ENCODE measurements at regions of chr10 and their contacts with region 1.

Region 1: GRCh38 chr10:124388823-124389612 is 29.7 kb downstream of the OAT start:
- DNase-seq: peak; percentile 91
- ATAC-seq: peak; percentile 99
- H3K4me3 Mint-ChIP-seq: no peak overlapping the region
- H3K27ac Mint-ChIP-seq: no peak overlapping the region
- H3K4me1 Mint-ChIP-seq: no peaks in the 10 kb centered on the region
- H3K27me3 Mint-ChIP-seq: no peaks in the 10 kb centered on the region

Region 2: DNA sequence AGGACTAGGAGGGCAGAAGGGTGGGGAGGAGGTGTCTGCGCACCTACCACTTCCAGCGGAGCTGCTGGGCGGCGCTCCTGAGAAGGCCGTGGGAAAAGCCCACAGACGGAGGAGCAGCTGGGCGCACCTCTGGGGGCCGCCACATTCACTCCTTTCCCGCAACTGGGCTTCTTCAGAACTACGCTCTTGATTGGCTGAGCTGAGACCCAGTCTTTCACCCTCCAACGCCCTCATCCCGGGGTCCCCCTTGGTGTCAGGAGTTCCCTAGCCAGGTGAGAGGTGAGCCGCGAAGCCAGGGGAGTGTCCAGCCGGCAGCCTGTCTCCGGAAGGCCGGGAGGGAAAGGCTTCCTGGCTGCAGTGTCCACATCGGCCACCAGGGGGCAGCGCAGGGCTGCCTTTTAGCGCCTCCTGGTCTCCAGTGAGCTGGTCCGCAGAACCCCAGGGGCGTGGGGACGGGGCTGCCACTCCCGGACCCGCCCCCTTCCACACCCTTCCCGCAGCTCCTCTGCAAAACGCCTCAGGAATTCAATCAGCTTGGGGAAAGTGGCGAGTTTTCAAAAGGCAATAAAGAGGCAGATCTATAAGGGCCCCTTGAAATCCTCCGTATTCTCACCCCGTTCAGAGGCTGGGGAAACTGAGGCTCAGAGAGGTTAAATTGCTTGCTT is 394.5 kb before region 1 on chr10:
- CTCF ChIA-PET with region 1: interaction called, 146 read pairs
- DNase-seq: peak; percentile 79
- ATAC-seq: peak; percentile 90
- H3K4me3 Mint-ChIP-seq: peak overlapping the region; percentile 11
- H3K27ac Mint-ChIP-seq: no peak overlapping the region
- H3K4me1 Mint-ChIP-seq: peaks cover 5% of the 10 kb centered on the region
- H3K27me3 Mint-ChIP-seq: peaks cover 65% of the 10 kb centered on the region

Region 3: GRCh38 chr10:124403548-124403947 is 14.5 kb after region 1 on chr10:
- CTCF ChIA-PET with region 1: interaction called, 51 read pairs
- DNase-seq: no peak
- ATAC-seq: peak; percentile 98
- H3K4me3 Mint-ChIP-seq: no peak overlapping the region
- H3K27ac Mint-ChIP-seq: peak overlapping the region; percentile 66
- H3K4me1 Mint-ChIP-seq: peaks cover 11% of the 10 kb centered on the region
- H3K27me3 Mint-ChIP-seq: no peaks in the 10 kb centered on the region

Region 4: DNA sequence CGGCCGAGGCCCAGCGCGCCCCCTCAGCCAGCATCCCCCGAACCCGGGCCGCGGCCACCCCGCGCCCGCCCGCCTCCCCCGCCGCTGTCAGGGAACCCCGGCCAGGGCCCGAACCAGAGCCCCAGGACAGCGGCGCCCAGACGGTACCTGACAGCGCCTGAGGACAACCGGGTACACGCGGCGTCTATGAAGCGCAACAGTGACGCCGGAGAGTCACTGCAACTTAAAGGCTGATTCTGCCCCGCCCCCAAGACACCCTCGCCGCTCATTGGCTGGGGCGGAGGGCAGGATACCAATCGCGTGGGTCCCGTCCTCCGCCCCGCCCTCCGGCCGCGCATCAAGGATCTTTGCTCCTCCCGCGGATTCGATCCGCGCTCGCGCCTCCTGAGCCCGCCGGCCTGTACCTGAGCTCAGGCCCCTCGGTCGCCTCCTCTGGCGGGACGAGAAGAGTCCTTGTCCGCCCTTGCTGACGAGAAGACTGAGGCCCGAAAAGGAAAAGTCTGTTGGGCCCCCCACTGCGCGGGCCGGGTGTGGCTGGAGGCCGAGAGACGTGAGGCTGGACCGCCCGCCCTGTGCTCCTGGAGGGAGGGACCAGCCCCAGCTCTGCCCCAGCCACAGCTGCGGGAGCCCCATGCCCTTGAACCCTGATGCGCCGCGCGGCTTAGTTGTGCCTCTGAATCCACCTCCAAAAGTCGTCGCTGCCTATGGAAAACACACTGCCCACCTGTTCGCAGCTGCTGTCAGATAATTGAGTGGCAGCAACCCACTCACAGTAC is 29.9 kb after region 1 on chr10 and contains the start of gene OAT:
- CTCF ChIA-PET with region 1: interaction called, 16 read pairs
- DNase-seq: peak; percentile 98
- ATAC-seq: peak; percentile 95
- H3K4me3 Mint-ChIP-seq: peak within 1 kb of the TSS; percentile 73
- H3K27ac Mint-ChIP-seq: peak within 1 kb of the TSS; percentile 65
- H3K4me1 Mint-ChIP-seq: peaks cover 14% of the 10 kb centered on the region
- H3K27me3 Mint-ChIP-seq: peaks cover 7% of the 10 kb centered on the region
- total RNA-seq, gene OAT: 18.7 to 32.3 TPM

Region 5: GRCh38 chr10:124495249-124495648 is 106.2 kb after region 1 on chr10:
- CTCF ChIA-PET with region 1: no interaction called
- DNase-seq: no peak
- ATAC-seq: no peak
- H3K4me3 Mint-ChIP-seq: no peak overlapping the region
- H3K27ac Mint-ChIP-seq: no peak overlapping the region
- H3K4me1 Mint-ChIP-seq: peaks cover 9% of the 10 kb centered on the region
- H3K27me3 Mint-ChIP-seq: no peaks in the 10 kb centered on the region